ENCODE measurements at regions of chr3 and their contacts with region 1.

Region 1: GRCh38 chr3:45037734-45038455 is 11.8 kb downstream of the CLEC3B start:
- DNase-seq: peak; percentile 94
- H3K4me3 ChIP-seq: no peak overlapping the region
- H3K27ac ChIP-seq: no peak overlapping the region
- H3K4me1 ChIP-seq: no peaks in the 10 kb centered on the region
- H3K27me3 ChIP-seq: no peaks in the 10 kb centered on the region
- CTCF ChIP-seq: peak; percentile 82 to 99 (median 96)
- POLR2A ChIP-seq: no peak

Region 2: DNA sequence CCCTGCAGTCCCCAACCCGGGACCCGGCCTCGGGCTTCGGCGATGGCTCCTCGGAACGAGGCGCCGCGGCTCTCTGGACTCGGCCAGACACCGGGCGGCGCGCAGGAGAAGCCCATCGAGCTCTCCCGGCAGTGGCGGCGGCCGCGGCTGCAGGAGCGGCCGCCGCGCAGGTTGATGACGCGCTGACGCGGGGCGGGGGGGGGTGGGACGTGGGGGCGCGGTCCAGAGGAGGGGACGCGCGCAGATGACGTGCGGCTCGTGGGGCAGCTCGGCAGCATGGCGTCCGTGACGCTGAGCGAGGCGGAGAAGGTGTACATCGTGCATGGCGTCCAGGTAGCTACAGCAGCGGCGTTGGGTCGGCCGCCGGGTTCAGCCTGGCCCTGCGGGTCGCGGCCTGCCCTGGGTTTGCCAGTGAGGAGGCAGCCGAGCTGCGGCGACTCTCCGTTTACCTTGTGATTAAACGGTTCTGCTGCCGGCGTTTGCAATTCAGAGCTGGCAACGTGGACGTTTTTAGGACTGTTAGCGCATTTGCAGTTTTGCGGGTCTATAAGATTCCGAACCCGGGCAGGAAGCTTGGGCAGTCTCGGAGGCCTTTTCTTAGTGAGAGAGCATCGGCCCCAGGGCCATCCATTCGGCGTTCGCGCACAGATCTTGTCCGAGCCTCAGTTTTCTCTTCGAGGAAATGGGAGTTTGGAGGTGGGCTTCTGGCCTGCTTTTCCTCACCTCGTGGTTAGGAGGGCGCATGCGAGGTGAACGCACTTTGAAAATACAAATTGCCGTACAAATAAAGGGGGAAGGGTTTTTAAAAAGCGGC is 61.7 kb before region 1 on chr3 and contains the starts of genes EXOSC7 and ZDHHC3:
- intact Hi-C with region 1: loop called (anchors 5 kb)
- DNase-seq: peak; percentile 85
- H3K4me3 ChIP-seq: peak within 1 kb of the TSS; percentile 90 to 98
- H3K27ac ChIP-seq: peak within 1 kb of the TSS; percentile 85 to 88
- H3K4me1 ChIP-seq: peaks cover 3% of the 10 kb centered on the region
- H3K27me3 ChIP-seq: no peaks in the 10 kb centered on the region
- CTCF ChIP-seq: peak in 2 of 4 experiments; percentile 11 to 13
- POLR2A ChIP-seq: peak; percentile 75
- total RNA-seq, gene EXOSC7: 55.2 to 56.2 TPM
- total RNA-seq, gene ZDHHC3: 64.6 to 91.7 TPM